HepG2 (cell line): ENCODE measurements at regions of chr17 and their contacts with region 1.

Region 1: DNA sequence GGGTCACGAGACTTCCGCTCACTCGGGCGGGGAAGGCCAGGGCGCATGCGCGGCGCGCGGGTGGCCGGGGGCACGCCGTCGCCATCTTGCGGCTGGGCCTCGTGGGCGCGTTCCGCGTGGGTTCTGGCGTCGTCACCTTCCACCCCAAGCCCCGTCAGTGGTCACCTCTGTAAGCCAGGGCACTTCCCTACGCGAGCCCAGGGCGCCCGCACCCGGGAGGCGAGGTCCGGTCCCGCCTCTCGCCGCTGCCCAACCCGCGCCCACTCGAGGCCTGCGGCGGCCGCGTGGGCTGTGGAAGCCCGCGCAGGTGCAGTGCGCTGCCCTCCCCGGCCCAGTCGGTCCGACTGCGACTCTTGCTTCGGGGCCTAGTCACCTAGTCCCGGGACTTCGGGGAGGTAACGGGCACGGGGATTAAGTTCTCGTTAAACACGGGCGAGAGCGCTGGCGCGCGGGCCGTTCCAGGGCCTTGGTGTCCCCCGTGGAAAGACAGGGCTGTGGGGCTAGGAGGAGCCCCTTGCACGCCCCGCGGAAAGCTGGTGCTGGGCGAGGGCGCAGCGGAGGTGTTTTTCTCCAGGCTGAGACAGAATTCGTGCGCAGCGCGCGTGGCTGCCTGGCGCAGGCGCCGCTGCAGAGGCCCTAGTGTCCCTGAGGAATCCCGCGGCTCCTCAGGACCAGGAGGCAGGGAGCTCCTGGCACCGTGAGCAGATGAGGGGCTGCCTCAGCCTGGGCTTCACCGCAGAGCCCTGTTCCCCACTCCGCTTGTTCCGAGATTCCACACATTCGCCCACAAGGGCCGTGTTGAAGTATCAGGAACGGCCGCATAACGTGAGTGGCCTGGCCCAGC is 472 bp upstream of the ARHGDIA start:
- DNase-seq: peak; percentile 86
- ATAC-seq: no peak; the same call in 2 of the 3 replicates
- H3K4me3 ChIP-seq: peak overlapping the region; percentile 65 to 92 (median 90)
- H3K27ac ChIP-seq: peak overlapping the region; percentile 98
- H3K4me1 ChIP-seq: peaks cover 52% of the 10 kb centered on the region
- H3K27me3 ChIP-seq: no peaks in the 10 kb centered on the region
- CTCF ChIP-seq: peak; percentile 74
- EP300 ChIP-seq: no peak; a peak in 1 of 4 replicates
- POLR2A ChIP-seq: peak in 1 of 2 experiments; percentile 58; a peak in 2 of 4 replicates
- RAD21 ChIP-seq: peak; percentile 81

Region 2: GRCh38 chr17:81735181-81736102 is 136.2 kb before region 1 on chr17:
- CTCF ChIA-PET with region 1: no interaction called
- POLR2A ChIA-PET with region 1: interaction called, 15 read pairs
- in situ Hi-C with region 1: no loop called
- intact Hi-C with region 1: no loop called
- DNase-seq: no peak
- ATAC-seq: peak; percentile 37
- H3K4me3 ChIP-seq: peak overlapping the region in 1 of 3 experiments; percentile 57; a peak in 1 of 6 replicates
- H3K27ac ChIP-seq: no peak overlapping the region
- H3K4me1 ChIP-seq: peaks cover 45% of the 10 kb centered on the region
- H3K27me3 ChIP-seq: peaks cover 9 to 65% of the 10 kb centered on the region in 2 experiments
- CTCF ChIP-seq: no peak
- EP300 ChIP-seq: no peak
- POLR2A ChIP-seq: no peak
- RAD21 ChIP-seq: no peak

Region 3: DNA sequence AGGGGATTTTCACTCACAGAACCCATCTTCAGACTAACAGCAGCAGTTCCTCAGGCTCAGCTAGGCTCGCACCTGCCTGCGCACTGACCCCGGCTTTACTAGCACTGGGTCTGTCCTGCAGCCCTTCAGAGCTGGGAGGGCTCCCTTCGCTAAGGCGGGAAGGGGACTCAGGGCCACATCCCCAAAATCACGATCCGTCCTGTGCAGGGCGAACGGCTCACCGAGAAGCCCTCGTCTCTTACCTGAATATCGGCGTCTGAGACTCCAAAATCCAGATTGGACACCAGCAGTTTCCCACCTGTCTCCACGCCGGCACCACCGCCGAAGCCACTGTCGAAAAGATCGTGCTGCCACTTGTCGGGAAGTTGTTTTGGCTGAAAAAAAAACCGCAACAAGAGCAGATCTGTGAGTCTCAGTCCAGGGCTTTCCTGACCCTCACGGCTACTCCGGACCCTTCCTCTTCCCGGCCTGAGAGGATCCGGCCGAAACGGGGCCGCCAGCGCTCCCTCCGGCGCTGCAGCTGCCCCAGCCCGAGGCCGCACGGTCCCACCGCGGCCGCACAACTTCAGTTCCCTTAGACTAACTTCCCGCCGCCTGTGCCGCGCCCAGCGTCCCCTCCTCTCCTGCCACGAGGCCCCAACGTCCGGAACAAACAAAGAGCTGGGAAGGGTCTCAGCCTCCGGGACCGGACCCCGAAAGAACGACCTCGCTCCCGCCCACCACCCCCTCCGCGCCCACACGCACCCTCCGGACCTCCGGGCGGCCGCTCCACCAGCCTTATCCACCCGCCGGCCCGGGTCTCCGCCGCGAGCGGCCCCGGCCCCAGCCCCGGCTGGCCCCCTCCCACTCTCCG is 19.1 kb after region 1 on chr17:
- CTCF ChIA-PET with region 1: no interaction called
- POLR2A ChIA-PET with region 1: interaction called, 23 read pairs
- in situ Hi-C with region 1: no loop called
- intact Hi-C with region 1: loop called (anchors 2 kb)
- DNase-seq: no peak
- ATAC-seq: no peak
- H3K4me3 ChIP-seq: peak overlapping the region; percentile 94 to 98 (median 94)
- H3K27ac ChIP-seq: peak overlapping the region; percentile 76
- H3K4me1 ChIP-seq: peaks cover 36% of the 10 kb centered on the region
- H3K27me3 ChIP-seq: peaks cover 0 to 6% of the 10 kb centered on the region in 2 experiments; a peak in 2 of 5 replicates
- CTCF ChIP-seq: no peak
- EP300 ChIP-seq: no peak
- POLR2A ChIP-seq: no peak
- RAD21 ChIP-seq: no peak

Region 4: GRCh38 chr17:81911277-81911961 is 39.8 kb after region 1 on chr17 and contains the start of gene PCYT2:
- CTCF ChIA-PET with region 1: no interaction called
- POLR2A ChIA-PET with region 1: interaction called, 13 read pairs
- in situ Hi-C with region 1: no loop called
- intact Hi-C with region 1: loop called (anchors 5 kb)
- DNase-seq: peak; percentile 87
- ATAC-seq: peak; percentile 72
- H3K4me3 ChIP-seq: peak within 1 kb of the TSS; percentile 68 to 99 (median 97)
- H3K27ac ChIP-seq: peak within 1 kb of the TSS; percentile 99
- H3K4me1 ChIP-seq: peaks cover 46% of the 10 kb centered on the region
- H3K27me3 ChIP-seq: no peaks in the 10 kb centered on the region; a peak in 1 of 5 replicates
- CTCF ChIP-seq: peak; percentile 47
- EP300 ChIP-seq: 0 out of 4 replicates have a peak, but pooled peaks of 1 of the 2 experiments have one; percentile 3
- POLR2A ChIP-seq: peak in 1 of 2 experiments; percentile 30; a peak in 1 of 4 replicates
- RAD21 ChIP-seq: no peak; the same call in 1 of the 2 replicates
- total RNA-seq, gene PCYT2: 240 and 297 TPM in 2 replicates